Activated B cell treated with CpG ODN at 0.5 μM for 24 hours (primary cell): ENCODE measurements at regions of chr6 and their contacts with region 1.

Region 1: GRCh38 chr6:37018198-37019064 is 13.0 kb downstream of the FGD2 start:
- DNase-seq: peak; percentile 72
- ATAC-seq: peak; percentile 95
- H3K4me3 Mint-ChIP-seq: no peak overlapping the region
- H3K27ac Mint-ChIP-seq: peak overlapping the region; percentile 73
- H3K4me1 Mint-ChIP-seq: peaks cover 31% of the 10 kb centered on the region
- H3K27me3 Mint-ChIP-seq: no peaks in the 10 kb centered on the region
- CTCF ChIP-seq: peak; percentile 83

Region 2: GRCh38 chr6:36874443-36875249 is 143.8 kb before region 1 on chr6 and contains the start of gene PPIL1:
- CTCF ChIA-PET with region 1: interaction called, 14 read pairs
- POLR2A ChIA-PET with region 1: interaction called, 6 read pairs
- intact Hi-C with region 1: no loop called
- DNase-seq: peak; percentile 83
- ATAC-seq: peak; percentile 94
- H3K4me3 Mint-ChIP-seq: peak within 1 kb of the TSS; percentile 98
- H3K27ac Mint-ChIP-seq: peak within 1 kb of the TSS; percentile 99
- H3K4me1 Mint-ChIP-seq: peaks cover 27% of the 10 kb centered on the region
- H3K27me3 Mint-ChIP-seq: no peaks in the 10 kb centered on the region
- CTCF ChIP-seq: no peak
- total RNA-seq, gene PPIL1: 23.4 and 27.0 TPM in 2 replicates

Region 3: GRCh38 chr6:36979347-36979742 is 39.1 kb before region 1 on chr6:
- CTCF ChIA-PET with region 1: interaction called, 167 read pairs
- POLR2A ChIA-PET with region 1: interaction called, 18 read pairs
- intact Hi-C with region 1: loop called (anchors 1 kb)
- DNase-seq: no peak
- ATAC-seq: peak; percentile 58
- H3K4me3 Mint-ChIP-seq: no peak overlapping the region
- H3K27ac Mint-ChIP-seq: no peak overlapping the region
- H3K4me1 Mint-ChIP-seq: peaks cover 30% of the 10 kb centered on the region
- H3K27me3 Mint-ChIP-seq: no peaks in the 10 kb centered on the region
- CTCF ChIP-seq: no peak

Region 4: DNA sequence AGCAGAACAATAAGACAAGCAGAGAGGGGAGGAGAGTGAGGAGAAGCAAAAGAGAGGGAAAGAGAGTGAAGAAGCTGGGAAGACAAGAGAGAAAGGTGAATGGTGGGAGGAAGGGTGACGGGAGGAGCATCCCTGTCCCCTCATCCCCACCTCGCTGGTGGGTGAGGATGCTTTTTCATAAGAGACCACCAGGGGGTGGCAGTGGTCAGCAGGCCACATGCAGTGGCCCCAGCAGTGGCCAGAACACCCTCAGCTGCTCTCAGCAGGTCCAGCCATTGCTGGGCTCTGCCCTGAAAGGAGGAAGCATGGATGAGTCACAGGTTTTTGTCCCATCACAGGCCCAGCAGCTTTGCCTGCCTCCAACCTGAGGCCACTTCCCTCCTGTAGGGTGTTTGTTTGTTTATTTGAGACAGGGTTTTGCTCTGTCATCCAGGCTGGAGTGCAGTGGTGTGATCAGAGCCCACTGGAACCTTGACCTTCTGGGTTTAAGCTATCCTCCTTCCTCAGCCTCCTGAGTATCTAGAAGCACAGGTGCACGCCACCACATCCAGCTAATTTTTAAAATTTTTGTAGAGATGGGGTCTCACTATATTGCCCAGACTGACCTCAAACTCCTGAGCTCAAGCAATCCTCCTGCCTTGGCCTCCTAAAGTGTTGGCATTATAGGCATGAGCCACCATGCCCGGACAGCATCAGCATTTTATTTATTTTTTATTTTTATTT is 11.0 kb after region 1 on chr6:
- CTCF ChIA-PET with region 1: interaction called, 11 read pairs
- POLR2A ChIA-PET with region 1: interaction called, 9 read pairs
- intact Hi-C with region 1: loop called (anchors 1 kb)
- DNase-seq: no peak
- ATAC-seq: peak; percentile 63
- H3K4me3 Mint-ChIP-seq: no peak overlapping the region
- H3K27ac Mint-ChIP-seq: peak overlapping the region; percentile 68
- H3K4me1 Mint-ChIP-seq: peaks cover 50% of the 10 kb centered on the region
- H3K27me3 Mint-ChIP-seq: no peaks in the 10 kb centered on the region
- CTCF ChIP-seq: no peak

Region 5: DNA sequence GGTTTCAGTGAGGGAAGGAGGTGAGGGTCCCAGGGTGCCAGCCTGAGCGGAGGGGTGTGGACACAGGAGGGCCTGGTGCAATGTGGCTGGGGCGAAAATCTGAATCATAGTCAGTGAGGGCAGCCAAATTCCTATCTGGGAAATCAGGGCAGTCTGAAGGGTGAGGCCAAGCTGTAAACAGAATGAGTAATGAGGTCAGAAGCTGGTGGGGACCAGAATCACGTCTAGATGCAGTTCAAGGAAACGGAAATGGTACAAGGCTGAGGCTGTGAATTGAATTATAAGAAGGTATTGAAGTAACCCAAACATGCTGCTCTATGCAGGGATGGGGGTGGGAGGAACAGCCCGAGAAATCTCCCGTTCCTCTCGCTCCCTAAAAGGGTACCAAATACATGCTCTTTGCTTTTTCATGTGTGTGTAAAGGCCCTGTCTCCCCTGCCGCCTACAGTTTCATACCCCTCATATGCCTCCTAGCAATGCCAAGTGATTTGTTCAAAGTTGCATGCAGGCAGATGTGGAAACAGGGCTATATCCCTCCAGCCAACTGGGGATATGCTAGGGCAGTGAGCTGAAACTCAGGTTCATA is 116.3 kb after region 1 on chr6:
- CTCF ChIA-PET with region 1: no interaction called
- POLR2A ChIA-PET with region 1: no interaction called
- intact Hi-C with region 1: no loop called
- DNase-seq: no peak
- ATAC-seq: no peak
- H3K4me3 Mint-ChIP-seq: no peak overlapping the region
- H3K27ac Mint-ChIP-seq: no peak overlapping the region
- H3K4me1 Mint-ChIP-seq: peaks cover 20% of the 10 kb centered on the region
- H3K27me3 Mint-ChIP-seq: no peaks in the 10 kb centered on the region
- CTCF ChIP-seq: no peak

Region 6: DNA sequence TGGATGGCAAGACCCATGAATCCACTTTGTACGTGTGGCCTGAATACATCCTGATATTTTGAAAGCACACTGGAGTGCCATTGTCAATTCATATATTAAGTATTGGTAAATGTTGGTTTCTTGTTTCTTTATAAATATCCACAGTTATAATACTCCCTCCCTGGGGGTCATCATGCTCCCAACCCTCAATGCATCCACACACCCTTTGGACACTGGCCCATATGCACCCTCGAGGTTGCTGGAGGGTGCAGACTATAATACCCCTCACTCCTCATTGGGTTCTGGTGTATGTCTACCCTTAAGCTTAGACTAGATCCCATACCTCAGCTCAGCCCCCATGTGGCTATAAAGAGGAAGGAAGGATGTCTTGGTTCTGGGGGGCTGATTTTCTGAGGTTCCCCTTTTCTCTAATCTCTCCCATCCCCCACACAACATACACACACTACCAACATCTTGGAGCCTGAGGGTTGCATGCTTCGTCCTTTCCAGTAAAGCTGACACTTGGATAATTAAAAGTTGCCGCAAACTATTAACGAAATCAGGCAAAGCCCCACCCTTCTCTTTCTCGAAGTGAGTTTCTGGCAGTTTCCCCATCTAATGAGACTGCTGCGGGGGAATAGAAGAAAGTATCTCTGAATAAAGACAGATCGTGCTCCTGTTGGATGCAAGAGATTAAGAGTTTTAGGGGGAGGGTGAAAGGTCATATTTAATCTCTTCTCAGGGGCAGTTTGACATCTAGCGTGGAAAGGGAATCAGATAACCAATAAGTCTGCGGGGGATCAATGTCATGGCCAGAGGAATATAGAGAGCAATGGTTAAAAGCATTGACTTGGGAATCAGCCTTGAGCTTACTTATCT is 158.9 kb after region 1 on chr6:
- CTCF ChIA-PET with region 1: interaction called, 91 read pairs
- POLR2A ChIA-PET with region 1: interaction called, 438 read pairs
- intact Hi-C with region 1: loop called (anchors 1 kb)
- DNase-seq: no peak
- ATAC-seq: peak; percentile 37
- H3K4me3 Mint-ChIP-seq: peak overlapping the region; percentile 65
- H3K27ac Mint-ChIP-seq: peak overlapping the region; percentile 90
- H3K4me1 Mint-ChIP-seq: peaks cover 62% of the 10 kb centered on the region
- H3K27me3 Mint-ChIP-seq: no peaks in the 10 kb centered on the region
- CTCF ChIP-seq: no peak